Pancreas (tissue), 10 donors: ENCODE measurements at regions of chr18 and their contacts with region 1.

Region 1: GRCh38 chr18:31565782-31566512 is 25.7 kb upstream of the TTR start:
- DNase-seq: no peak
- ATAC-seq: peak in 1 of 4 donors; percentile 45
- H3K4me3 ChIP-seq: no peak overlapping the region
- H3K27ac ChIP-seq: peak overlapping the region in 1 of 4 donors; percentile 17
- H3K4me1 ChIP-seq: no peaks in the 10 kb centered on the region
- H3K27me3 ChIP-seq: no peaks in the 10 kb centered on the region
- CTCF ChIP-seq: no peak

Region 2: DNA sequence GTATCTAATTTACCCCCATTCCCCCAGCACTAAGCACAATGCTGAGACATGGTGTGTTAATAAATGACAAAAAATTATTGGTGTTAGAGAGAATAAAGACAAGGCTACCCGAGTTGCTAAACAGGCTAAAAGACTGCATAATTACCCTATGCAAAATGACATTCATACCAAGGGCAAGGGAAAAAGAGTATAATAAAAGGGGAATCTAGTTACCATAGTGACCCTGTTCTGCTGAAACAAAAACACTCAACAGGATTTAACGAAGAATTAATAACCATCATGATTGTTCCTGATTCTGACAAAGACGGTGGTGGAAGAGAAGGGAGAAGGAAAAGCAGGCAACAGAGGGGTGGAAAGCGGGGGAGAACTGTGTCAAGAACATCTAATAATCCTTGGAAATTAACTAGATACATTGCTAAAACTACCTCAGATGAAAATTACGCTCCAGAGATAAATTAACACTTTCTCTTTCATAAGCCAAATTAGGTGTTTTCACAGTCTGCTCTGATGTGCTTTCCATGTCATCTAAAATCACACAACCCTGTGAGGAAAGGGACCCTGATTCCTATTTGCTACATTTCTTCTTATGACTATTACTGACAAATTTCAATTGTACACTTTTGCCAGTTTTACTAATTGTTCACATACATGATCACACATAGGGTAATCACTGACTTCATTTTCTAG is 51.2 kb after region 1 on chr18:
- intact Hi-C with region 1: no loop called
- DNase-seq: no peak
- ATAC-seq: no peak
- H3K4me3 ChIP-seq: no peak overlapping the region
- H3K27ac ChIP-seq: no peak overlapping the region
- H3K4me1 ChIP-seq: no peaks in the 10 kb centered on the region
- H3K27me3 ChIP-seq: no peaks in the 10 kb centered on the region
- CTCF ChIP-seq: no peak

Region 3: DNA sequence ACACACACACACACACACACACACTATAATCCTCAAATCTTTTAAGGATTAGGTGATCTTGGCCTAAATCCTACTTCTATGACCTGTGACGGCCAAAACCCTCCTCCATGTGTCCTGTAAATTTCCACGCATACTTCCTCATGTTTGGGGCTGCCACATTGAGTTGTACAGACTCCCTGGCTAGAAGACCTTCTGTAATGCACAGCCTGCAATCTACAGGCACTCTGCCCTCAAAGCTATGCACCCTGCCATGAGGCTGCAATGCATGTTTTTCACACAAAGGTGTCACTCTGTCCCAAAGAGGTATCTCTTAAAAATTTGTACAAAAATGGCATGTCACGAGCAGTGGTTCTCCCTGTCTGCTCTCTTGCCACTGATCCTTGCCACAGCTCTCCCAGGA is 144.9 kb after region 1 on chr18:
- intact Hi-C with region 1: loop called in 1 of 3 experiments (anchors 5 kb)
- DNase-seq: no peak
- ATAC-seq: no peak
- H3K4me3 ChIP-seq: no peak overlapping the region
- H3K27ac ChIP-seq: no peak overlapping the region
- H3K4me1 ChIP-seq: no peaks in the 10 kb centered on the region
- H3K27me3 ChIP-seq: no peaks in the 10 kb centered on the region
- CTCF ChIP-seq: no peak